Adrenal gland (tissue), 19 donors: ENCODE measurements at regions of chr1 and their contacts with region 1.

Region 1: GRCh38 chr1:150410582-150411101 is 46.7 kb downstream of the RPRD2 start:
- DNase-seq: peak in 3 of 7 donors; percentile 30 to 40 (median 31)
- H3K4me3 ChIP-seq: no peak overlapping the region
- H3K27ac ChIP-seq: no peak overlapping the region
- H3K4me1 ChIP-seq: peaks cover 21 to 41% of the 10 kb centered on the region in 2 donors
- H3K27me3 ChIP-seq: no peaks in the 10 kb centered on the region
- CTCF ChIP-seq: no peak
- POLR2A ChIP-seq: no peak

Region 2: GRCh38 chr1:150281837-150282653 is 128.6 kb before region 1 on chr1 and contains the start of gene CIART:
- intact Hi-C with region 1: no loop called
- DNase-seq: peak; percentile 92 to 99 (median 99)
- H3K4me3 ChIP-seq: peak within 1 kb of the TSS; percentile 13 to 69 (median 58)
- H3K27ac ChIP-seq: peak within 1 kb of the TSS; percentile 88 to 97 (median 93)
- H3K4me1 ChIP-seq: peaks cover 12 to 15% of the 10 kb centered on the region in 2 donors
- H3K27me3 ChIP-seq: no peaks in the 10 kb centered on the region
- CTCF ChIP-seq: no peak
- POLR2A ChIP-seq: peak; percentile 67 to 84
- total RNA-seq, gene CIART: 4.4 to 11.8 (median 8.9) TPM

Region 3: DNA sequence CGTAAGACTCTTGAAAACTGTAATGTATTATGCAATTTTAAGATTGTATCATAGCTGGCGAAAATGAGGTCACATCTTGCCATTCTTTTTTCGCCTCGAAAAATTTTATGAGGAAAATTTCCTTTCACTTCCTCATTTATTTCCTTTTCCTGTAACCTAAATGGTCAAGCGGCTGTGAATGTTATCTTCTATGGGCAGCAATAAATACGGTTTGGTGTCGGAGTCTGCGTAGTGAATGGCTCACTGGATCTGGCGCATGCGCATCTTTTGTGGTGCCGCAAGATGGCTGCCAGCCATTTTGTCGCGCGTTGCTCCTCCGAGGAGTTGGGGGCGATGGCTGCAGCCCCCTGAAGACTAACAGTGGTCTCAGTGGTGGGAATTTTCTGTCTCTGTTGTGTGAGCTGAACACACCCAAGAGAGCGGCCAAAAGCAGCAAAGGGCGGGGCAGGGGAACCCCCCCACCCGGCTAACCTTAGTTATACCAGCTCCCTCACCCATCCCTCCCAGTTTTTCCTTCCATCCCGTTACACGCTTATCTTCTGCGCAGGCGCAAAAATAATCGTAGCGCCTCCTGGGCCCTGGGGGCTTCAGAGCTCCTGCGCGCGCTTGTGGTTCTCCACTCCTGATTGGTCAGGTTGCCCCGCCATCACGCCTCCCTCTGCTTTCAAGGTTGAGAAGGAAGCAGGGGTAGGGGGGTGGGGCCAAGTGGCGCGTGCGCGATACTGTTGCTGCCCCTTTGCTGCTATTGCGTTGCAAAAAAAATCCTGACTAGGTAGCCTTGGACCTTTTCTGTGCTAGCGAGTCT is 47.0 kb before region 1 on chr1 and contains the start of gene RPRD2:
- intact Hi-C with region 1: loop called in 1 of 2 experiments (anchors 10 kb)
- DNase-seq: peak; percentile 99 to 100 (median 100)
- H3K4me3 ChIP-seq: peak within 1 kb of the TSS; percentile 42 to 87 (median 64)
- H3K27ac ChIP-seq: peak within 1 kb of the TSS; percentile 91 to 99 (median 97)
- H3K4me1 ChIP-seq: peaks cover 10 to 26% of the 10 kb centered on the region in 2 donors
- H3K27me3 ChIP-seq: no peaks in the 10 kb centered on the region
- CTCF ChIP-seq: peak in 2 of 6 experiments; percentile 18 to 32
- POLR2A ChIP-seq: peak; percentile 81 to 89
- total RNA-seq, gene RPRD2: 11.3 to 44.5 (median 24.8) TPM